ENCODE measurements at regions of chr3 and their contacts with region 1.

Region 1: DNA sequence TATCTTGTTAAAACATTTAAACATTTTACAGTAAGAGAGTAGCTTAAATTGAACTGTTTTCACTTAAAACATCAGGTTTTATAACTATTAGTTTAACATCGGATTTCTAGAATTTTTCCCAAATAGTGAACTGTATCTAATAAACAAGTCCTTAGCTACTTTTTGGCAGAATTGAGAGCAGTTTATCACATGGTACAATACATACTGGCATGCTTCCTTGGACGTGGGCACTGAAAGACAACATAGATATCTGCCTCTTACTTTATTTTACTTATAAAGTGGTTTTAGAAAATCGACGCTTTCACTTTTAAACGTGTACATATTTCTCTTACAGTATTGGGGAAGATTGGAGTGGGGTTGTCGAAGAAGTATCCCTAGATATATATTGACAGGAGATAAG is 52.8 kb downstream of the OPA1 start:
- DNase-seq: no peak
- H3K4me3 ChIP-seq: no peak overlapping the region
- H3K27ac ChIP-seq: no peak overlapping the region
- H3K4me1 ChIP-seq: no peaks in the 10 kb centered on the region
- CTCF ChIP-seq: no peak

Region 2: DNA sequence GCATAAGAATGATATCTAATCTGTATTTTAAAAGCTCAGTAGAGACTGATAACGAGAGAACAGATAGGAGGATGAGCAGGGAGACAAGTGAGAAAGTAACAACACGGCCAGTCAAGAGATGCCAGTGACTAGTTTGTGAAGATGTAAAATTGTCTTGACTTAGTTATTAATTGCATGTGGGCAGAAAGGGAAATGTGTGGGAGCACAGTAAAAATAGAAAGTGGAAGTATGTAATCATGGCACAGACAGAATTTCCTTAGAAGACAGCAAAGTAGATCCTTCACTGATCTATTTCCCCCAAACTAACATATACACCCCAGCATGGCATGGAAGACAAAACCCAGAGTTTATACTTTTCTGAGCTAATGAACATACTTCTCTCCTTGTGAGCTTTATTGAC is 1262.9 kb before region 1 on chr3:
- CTCF ChIA-PET with region 1: no interaction called
- POLR2A ChIA-PET with region 1: no interaction called
- intact Hi-C with region 1: no loop called
- DNase-seq: no peak
- H3K4me3 ChIP-seq: no peak overlapping the region
- H3K27ac ChIP-seq: no peak overlapping the region
- H3K4me1 ChIP-seq: no peaks in the 10 kb centered on the region
- CTCF ChIP-seq: no peak

Region 3: GRCh38 chr3:193554811-193555210 is 91.0 kb before region 1 on chr3 and contains the start of gene ATP13A4:
- CTCF ChIA-PET with region 1: no interaction called
- POLR2A ChIA-PET with region 1: no interaction called
- intact Hi-C with region 1: no loop called
- DNase-seq: no peak
- H3K4me3 ChIP-seq: no peak within 1 kb of the TSS
- H3K27ac ChIP-seq: no peak within 1 kb of the TSS
- H3K4me1 ChIP-seq: no peaks in the 10 kb centered on the region
- CTCF ChIP-seq: no peak
- total RNA-seq, gene ATP13A4: 0.44 and 0.51 TPM in 2 replicates

Region 4: GRCh38 chr3:193655831-193656433 is 10.1 kb after region 1 on chr3:
- CTCF ChIA-PET with region 1: no interaction called
- POLR2A ChIA-PET with region 1: interaction called, 11 read pairs
- intact Hi-C with region 1: no loop called
- DNase-seq: no peak
- H3K4me3 ChIP-seq: no peak overlapping the region
- H3K27ac ChIP-seq: no peak overlapping the region
- H3K4me1 ChIP-seq: no peaks in the 10 kb centered on the region
- CTCF ChIP-seq: no peak